Gastrocnemius medialis (tissue), 4 donors: ENCODE measurements at regions of chr19 and their contacts with region 1.

Region 1: GRCh38 chr19:37906869-37907734 is at the start of gene SIPA1L3:
- DNase-seq: peak; percentile 89 to 90
- ATAC-seq: peak; percentile 97
- H3K4me3 ChIP-seq: peak within 1 kb of the TSS; percentile 84 to 98 (median 90)
- H3K27ac ChIP-seq: peak within 1 kb of the TSS; percentile 62 to 85 (median 83)
- H3K4me1 ChIP-seq: peaks cover 9 to 16% of the 10 kb centered on the region in 2 donors
- H3K27me3 ChIP-seq: no peaks in the 10 kb centered on the region
- CTCF ChIP-seq: peak in 1 of 5 experiments; percentile 3
- POLR2A ChIP-seq: peak; percentile 69 to 87
- total RNA-seq, gene SIPA1L3: 4.1 to 18.7 (median 6.1) TPM

Region 2: GRCh38 chr19:37334179-37335071 is 572.7 kb before region 1 on chr19:
- in situ Hi-C with region 1: no loop called
- intact Hi-C with region 1: loop called (anchors 10 kb)
- DNase-seq: peak; percentile 87 to 91
- ATAC-seq: peak; percentile 99 to 100
- H3K4me3 ChIP-seq: peak overlapping the region; percentile 66 to 93 (median 82)
- H3K27ac ChIP-seq: peak overlapping the region; percentile 83 to 91 (median 88)
- H3K4me1 ChIP-seq: peaks cover 16 to 25% of the 10 kb centered on the region in 2 donors
- H3K27me3 ChIP-seq: no peaks in the 10 kb centered on the region
- CTCF ChIP-seq: no peak
- POLR2A ChIP-seq: peak; percentile 29 to 61

Region 3: DNA sequence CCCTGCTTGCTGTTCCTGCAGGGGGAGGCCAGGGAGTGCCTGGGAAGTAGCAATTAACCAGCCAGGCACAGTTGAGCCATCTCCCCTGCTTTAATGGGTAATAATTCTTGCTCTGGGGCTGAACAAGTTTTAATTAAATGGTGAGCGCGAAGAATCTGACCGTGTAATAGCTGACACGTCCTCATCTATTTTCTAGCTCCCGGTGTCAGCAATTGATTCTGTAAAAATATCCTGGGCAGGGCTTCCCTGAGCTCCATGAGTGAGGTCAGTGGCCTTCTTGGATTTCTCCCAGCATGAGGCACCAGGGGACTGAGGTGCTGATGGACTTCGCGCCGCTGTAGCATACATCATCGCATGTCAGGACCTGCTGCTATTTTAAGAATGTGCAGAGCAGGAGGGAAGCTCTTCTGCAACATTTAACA is 26.8 kb after region 1 on chr19:
- in situ Hi-C with region 1: no loop called
- intact Hi-C with region 1: loop called (anchors 1 kb)
- DNase-seq: peak; percentile 9 to 30
- ATAC-seq: peak in 1 of 2 donors; percentile 69
- H3K4me3 ChIP-seq: no peak overlapping the region
- H3K27ac ChIP-seq: peak overlapping the region in 1 of 4 donors; percentile 29
- H3K4me1 ChIP-seq: peaks cover 22 to 26% of the 10 kb centered on the region in 2 donors
- H3K27me3 ChIP-seq: no peaks in the 10 kb centered on the region
- CTCF ChIP-seq: no peak
- POLR2A ChIP-seq: no peak

Region 4: DNA sequence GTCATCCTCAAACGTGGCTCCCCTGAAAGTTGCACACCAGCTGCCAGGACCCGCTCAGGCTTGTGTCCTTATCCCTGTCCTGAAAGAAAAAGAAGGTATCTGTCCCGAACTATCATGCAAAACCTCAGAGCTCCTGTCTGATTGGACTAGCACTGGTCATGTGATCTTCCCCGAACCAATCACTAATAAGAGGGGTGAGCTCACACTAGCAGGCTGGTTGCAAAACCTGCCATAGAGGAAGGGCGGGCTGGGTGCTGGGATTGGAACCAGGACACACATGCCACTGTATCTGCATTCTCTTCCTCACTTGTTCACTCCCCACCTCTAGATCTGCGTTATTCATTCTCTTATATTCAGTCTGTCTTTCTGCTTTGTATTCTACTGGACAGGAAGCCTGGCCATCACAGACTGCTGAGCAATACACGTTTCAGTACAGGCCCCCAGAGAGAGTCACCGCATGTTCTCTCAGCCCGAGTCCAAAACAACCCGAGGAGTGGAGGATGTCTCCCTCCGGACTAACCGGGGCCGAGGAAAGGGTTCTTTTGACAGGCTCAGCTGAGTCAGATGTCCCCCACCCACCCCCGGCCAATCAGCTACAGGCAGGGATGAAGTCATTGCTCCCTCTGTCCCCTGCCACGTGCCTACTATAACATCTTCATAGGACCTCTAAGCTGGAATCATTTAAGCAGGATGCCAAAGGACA is 97.6 kb after region 1 on chr19:
- in situ Hi-C with region 1: no loop called
- intact Hi-C with region 1: loop called (anchors 1 kb)
- DNase-seq: peak; percentile 79 to 82
- ATAC-seq: peak; percentile 98
- H3K4me3 ChIP-seq: peak overlapping the region; percentile 33 to 49 (median 45)
- H3K27ac ChIP-seq: peak overlapping the region; percentile 56 to 75 (median 64)
- H3K4me1 ChIP-seq: peaks cover 14 to 15% of the 10 kb centered on the region in 2 donors
- H3K27me3 ChIP-seq: no peaks in the 10 kb centered on the region
- CTCF ChIP-seq: no peak
- POLR2A ChIP-seq: peak; percentile 51 to 61

Region 5: GRCh38 chr19:38095411-38096308 is 188.6 kb after region 1 on chr19:
- in situ Hi-C with region 1: loop called in 2 of 4 experiments (anchors 5 to 10 kb)
- intact Hi-C with region 1: loop called (anchors 5 kb)
- DNase-seq: peak; percentile 21 to 43
- ATAC-seq: peak; percentile 39 to 81
- H3K4me3 ChIP-seq: no peak overlapping the region
- H3K27ac ChIP-seq: no peak overlapping the region
- H3K4me1 ChIP-seq: peaks cover 0 to under 1% of the 10 kb centered on the region in 2 donors
- H3K27me3 ChIP-seq: no peaks in the 10 kb centered on the region
- CTCF ChIP-seq: peak; percentile 38 to 68 (median 61)
- POLR2A ChIP-seq: no peak

Region 6: GRCh38 chr19:38245826-38246498 is 338.9 kb after region 1 on chr19:
- in situ Hi-C with region 1: no loop called
- intact Hi-C with region 1: loop called (anchors 10 kb)
- DNase-seq: no peak
- ATAC-seq: no peak
- H3K4me3 ChIP-seq: no peak overlapping the region
- H3K27ac ChIP-seq: peak overlapping the region in 3 of 4 donors; percentile 25 to 41 (median 30)
- H3K4me1 ChIP-seq: peaks cover 3 to 6% of the 10 kb centered on the region in 2 donors
- H3K27me3 ChIP-seq: peaks cover 0 to 6% (median 0%) of the 10 kb centered on the region in 3 donors
- CTCF ChIP-seq: no peak
- POLR2A ChIP-seq: no peak

Region 7: DNA sequence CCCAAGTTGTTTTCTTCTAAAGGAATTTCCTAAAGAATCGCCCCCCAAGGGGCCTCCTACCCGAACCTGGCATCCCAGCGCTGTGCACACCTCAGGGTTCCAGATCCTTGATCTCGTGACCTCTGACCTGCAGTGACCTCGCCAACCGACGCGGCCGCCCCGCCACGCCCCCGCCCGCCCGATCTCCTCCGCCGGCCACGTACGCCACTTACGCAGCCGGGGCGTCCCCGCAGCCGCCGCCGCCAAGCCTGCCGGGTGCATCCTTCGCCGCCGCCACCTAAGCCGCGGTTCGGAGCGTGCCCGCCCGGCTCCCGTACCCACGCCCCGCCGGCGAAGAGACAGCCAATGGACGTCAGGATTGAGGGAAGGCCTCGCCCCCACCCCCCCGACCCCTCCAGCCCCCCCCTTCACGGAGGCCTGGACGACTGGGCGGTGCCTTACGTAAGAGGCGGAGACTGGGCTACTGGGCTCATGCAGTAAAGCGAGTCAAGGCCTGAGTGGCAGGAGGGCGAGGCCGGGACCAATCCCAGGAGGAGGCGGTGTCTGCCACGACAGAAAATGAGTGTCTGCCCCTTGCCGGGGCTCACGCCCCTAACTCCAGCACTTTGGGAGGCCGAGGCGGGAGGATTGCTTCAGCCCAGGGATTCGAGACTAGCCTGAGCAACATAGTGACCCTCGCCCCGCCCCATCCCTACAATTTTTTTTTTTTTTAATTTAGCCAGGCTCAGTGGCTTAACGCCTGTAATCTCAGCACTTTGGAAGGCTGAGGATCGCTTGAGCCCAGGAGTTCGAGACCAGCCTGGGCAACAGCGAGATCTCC is 408.8 kb after region 1 on chr19 and contains the start of gene YIF1B:
- in situ Hi-C with region 1: no loop called
- intact Hi-C with region 1: loop called (anchors 5 kb)
- DNase-seq: peak; percentile 95 to 97
- ATAC-seq: peak; percentile 98
- H3K4me3 ChIP-seq: peak within 1 kb of the TSS; percentile 59 to 76 (median 66)
- H3K27ac ChIP-seq: peak within 1 kb of the TSS; percentile 85 to 93 (median 92)
- H3K4me1 ChIP-seq: peaks cover 6 to 9% of the 10 kb centered on the region in 2 donors
- H3K27me3 ChIP-seq: peaks cover 0 to 11% (median 0%) of the 10 kb centered on the region in 3 donors
- CTCF ChIP-seq: no peak
- POLR2A ChIP-seq: peak in 1 of 2 donors; percentile 36
- total RNA-seq, gene YIF1B: 28.3 to 39.5 (median 31.9) TPM

Region 8: GRCh38 chr19:38729653-38730469 is 822.8 kb after region 1 on chr19:
- in situ Hi-C with region 1: no loop called
- intact Hi-C with region 1: no loop called
- DNase-seq: peak in 1 of 2 donors; percentile 58
- ATAC-seq: peak in 1 of 2 donors; percentile 45
- H3K4me3 ChIP-seq: no peak overlapping the region
- H3K27ac ChIP-seq: peak overlapping the region; percentile 25 to 54 (median 40)
- H3K4me1 ChIP-seq: peaks cover 7 to 8% of the 10 kb centered on the region in 2 donors
- H3K27me3 ChIP-seq: no peaks in the 10 kb centered on the region
- CTCF ChIP-seq: peak; percentile 71 to 89 (median 76)
- POLR2A ChIP-seq: no peak